ENCODE measurements at regions of chr16 and their contacts with region 1.

Region 1: DNA sequence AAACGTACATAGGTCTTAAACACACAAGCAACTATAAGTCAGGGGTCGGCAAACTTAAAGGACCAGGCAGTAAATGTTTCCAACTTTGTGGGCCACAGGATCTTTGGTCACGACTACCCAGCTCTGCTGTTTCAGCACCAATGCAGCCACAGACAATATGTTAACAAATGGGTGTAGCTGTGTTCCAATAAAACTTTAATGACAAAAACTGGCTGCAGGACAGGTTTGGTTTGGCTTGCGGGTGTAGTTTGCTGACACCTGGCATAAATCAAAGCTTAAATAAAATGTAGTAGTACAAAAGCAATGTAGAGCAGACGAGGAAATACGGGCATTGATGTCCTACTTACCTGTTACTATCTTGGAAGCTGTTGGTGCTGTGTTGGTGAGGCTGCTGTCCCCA is 84.7 kb downstream of the SLC5A11 start:
- DNase-seq: no peak
- H3K4me3 ChIP-seq: no peak overlapping the region
- H3K27me3 ChIP-seq: no peaks in the 10 kb centered on the region
- CTCF ChIP-seq: no peak

Region 2: DNA sequence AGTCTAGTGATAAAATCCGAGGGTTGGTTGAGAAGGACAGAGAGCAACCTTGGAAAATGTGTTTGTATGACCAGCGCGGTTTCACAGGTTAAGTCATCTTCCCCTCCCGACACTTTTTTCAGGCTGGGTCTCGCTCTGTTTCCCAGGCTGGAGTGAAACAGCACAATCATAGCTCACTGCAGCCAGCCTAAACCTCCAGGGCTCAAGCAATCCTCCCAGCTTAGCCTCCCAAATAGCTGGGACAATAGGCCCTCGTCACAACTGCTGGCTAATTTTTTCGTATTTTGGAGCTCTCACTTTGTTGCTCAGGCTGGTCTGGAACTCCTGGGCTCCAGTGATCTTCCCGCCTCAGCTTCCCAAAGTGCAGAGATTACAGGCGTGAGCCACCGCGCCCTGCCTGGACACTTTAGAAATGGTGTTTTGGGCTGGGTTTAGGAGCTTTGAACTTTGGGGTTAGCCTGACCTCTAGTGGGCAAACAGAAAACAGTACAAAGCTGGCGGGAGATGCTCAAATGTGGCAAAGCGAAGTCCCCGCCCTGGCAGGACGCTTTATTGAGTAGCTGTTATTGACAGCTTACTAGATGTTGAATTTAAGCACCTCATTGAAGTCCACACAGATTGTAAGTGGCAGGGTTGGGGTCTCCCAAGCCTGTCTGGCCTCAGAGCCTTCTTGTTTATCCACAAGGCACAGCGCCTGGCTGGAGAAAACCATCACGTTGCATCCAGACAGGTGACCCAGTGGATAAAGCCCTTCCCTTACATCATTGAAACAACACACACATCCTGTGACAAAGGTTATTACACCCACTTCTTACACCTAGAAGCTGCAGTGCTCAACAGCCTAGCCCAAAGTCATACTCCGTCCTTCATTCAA is 425.7 kb before region 1 on chr16:
- CTCF ChIA-PET with region 1: no interaction called
- POLR2A ChIA-PET with region 1: no interaction called
- DNase-seq: no peak
- H3K4me3 ChIP-seq: no peak overlapping the region
- H3K27me3 ChIP-seq: peaks cover 3% of the 10 kb centered on the region; the same call in 1 of the 2 replicates
- CTCF ChIP-seq: peak; percentile 81

Region 3: DNA sequence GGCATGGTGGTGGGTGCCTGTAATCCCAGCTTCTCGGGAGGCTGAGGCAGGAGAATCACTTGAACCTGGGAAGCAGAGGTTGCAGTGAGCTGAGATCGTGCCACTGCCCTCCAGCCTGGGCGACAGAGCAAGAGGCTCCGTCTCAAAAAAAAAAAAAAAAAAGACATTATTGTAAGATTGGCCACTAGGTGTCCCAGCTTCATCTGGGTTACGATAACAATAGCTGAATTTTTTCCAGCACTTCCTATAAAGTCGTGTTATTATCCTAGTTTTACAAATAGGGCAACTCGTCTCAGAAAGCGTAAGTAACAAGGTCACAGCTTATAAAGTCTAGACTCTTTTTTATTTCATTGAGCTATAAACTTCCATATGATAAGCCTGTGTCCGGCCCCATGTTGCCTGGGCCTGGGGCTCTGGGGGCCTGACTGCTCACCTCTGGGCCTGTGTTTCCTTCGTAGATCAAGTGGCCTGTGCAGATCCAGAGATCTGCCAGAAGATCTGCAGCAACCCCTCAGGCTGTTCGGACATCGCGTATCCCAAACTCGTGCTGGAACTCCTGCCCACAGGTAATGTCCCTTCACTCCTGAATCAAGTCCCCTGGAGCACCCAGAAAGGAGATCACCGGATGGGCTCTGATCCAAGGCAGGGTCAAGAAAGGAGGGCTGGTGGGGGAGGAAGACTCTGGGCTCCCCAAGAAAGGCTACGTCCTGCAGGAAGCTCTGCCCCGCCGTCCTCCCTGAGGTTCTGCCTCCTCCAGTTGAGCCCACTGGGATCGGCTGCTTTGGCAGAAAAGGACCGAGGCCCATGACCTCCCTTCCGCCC is 24.0 kb before region 1 on chr16:
- CTCF ChIA-PET with region 1: interaction called, 10 read pairs
- POLR2A ChIA-PET with region 1: no interaction called
- DNase-seq: no peak
- H3K4me3 ChIP-seq: no peak overlapping the region
- H3K27me3 ChIP-seq: no peaks in the 10 kb centered on the region
- CTCF ChIP-seq: peak; percentile 58

Measured in BJ (cell line).